ENCODE measurements at regions of chr5 and their contacts with region 1.

Region 1: DNA sequence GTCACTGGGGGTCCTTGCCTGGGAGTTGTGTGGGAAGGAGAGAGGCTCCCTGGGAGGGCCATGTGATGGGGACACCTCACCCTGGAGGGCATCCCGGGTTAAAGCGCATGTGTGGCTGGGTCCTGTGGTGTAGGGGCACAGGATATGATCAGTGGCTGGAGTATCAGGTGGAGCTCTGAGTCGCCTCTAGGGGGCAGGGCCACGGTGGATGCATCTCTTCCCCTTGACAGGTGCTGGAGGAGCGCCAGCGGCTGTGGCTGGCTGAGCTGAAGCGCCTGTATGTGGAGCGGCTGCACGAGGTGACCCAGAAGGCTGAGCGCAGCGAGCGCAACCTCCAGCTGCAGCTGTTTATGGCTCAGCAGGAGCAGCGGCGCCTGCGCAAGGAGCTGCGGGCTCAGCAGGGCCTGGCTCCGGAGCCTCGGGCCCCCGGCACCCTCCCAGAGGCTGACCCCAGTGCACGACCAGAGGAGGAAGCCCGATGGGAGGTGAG is 7.6 kb downstream of the N4BP3 start:
- DNase-seq: peak; percentile 94
- ATAC-seq: peak; percentile 74
- H3K4me3 Mint-ChIP-seq: no peak overlapping the region
- H3K27ac Mint-ChIP-seq: no peak overlapping the region
- H3K4me1 Mint-ChIP-seq: peaks cover 36% of the 10 kb centered on the region
- H3K27me3 Mint-ChIP-seq: no peaks in the 10 kb centered on the region
- CTCF ChIP-seq: peak; percentile 67

Region 2: GRCh38 chr5:178137991-178138390 is 17.1 kb after region 1 on chr5:
- CTCF ChIA-PET with region 1: interaction called, 84 read pairs
- POLR2A ChIA-PET with region 1: interaction called, 44 read pairs
- intact Hi-C with region 1: no loop called
- DNase-seq: no peak
- ATAC-seq: no peak
- H3K4me3 Mint-ChIP-seq: no peak overlapping the region
- H3K27ac Mint-ChIP-seq: no peak overlapping the region
- H3K4me1 Mint-ChIP-seq: peaks cover 10% of the 10 kb centered on the region
- H3K27me3 Mint-ChIP-seq: no peaks in the 10 kb centered on the region
- CTCF ChIP-seq: no peak

Region 3: GRCh38 chr5:178146020-178146820 is 25.3 kb after region 1 on chr5:
- CTCF ChIA-PET with region 1: interaction called, 84 read pairs
- POLR2A ChIA-PET with region 1: interaction called, 6 read pairs
- intact Hi-C with region 1: loop called (anchors 5 kb)
- DNase-seq: peak; percentile 87
- ATAC-seq: peak; percentile 71
- H3K4me3 Mint-ChIP-seq: no peak overlapping the region
- H3K27ac Mint-ChIP-seq: peak overlapping the region; percentile 67
- H3K4me1 Mint-ChIP-seq: peaks cover 41% of the 10 kb centered on the region
- H3K27me3 Mint-ChIP-seq: no peaks in the 10 kb centered on the region
- CTCF ChIP-seq: peak; percentile 86